ENCODE measurements at regions of chr20 and their contacts with region 1.

Region 1: DNA sequence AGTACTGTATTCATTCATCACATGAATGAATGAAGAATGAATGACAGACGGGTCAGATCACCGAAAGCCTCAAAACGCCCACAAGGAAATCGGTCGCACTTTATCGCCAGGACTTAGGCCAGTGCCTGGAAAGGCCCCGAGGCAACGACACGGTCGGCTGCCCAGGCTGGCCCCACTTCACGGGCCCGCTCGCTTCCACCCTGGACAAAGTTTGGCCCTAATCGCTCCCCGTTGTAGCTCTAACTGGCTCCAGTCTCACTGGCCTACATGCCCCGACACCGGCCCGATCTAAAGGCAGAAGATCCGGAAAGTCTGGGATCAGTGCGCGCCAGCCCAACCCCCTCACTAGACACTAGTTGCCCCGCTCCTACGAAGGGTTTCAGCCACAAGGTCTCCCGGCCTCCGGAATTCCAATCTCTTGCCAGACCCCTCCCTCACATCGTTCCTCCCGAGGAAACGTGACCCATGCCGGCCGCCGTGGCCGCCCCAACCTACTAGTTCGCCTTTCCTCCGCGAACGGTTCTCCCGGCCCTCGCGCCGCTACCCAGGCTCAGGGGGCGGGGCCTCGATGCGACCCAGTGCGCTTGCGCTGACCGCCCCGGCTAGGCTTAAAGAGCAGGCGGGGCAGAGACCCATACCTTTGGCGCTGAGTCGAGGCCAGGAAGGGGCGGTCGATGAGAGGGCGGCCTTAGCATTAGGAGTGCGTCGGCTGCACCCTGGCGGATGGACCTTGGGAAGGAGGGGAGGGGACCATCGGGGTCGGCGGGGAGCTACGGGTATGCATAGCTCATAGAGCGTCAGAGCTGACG is at the starts of genes GSS and MYH7B:
- DNase-seq: peak; percentile 95 to 96 (median 95)
- H3K4me3 ChIP-seq: peak within 1 kb of the TSS; percentile 69 to 89 (median 84)
- H3K4me3 Mint-ChIP-seq: peak within 1 kb of the TSS; percentile 97 to 99
- H3K27ac ChIP-seq: peak within 1 kb of the TSS; percentile 88 to 91
- H3K27ac Mint-ChIP-seq: peak within 1 kb of the TSS; percentile 96 to 99 (median 97)
- H3K4me1 ChIP-seq: peaks cover 13 to 14% of the 10 kb centered on the region in 2 donors
- H3K4me1 Mint-ChIP-seq: peaks cover 16% of the 10 kb centered on the region
- H3K27me3 ChIP-seq: no peaks in the 10 kb centered on the region
- H3K27me3 Mint-ChIP-seq: peaks cover 0 to 3% (median 0%) of the 10 kb centered on the region in 3 donors
- CTCF ChIP-seq: no peak
- polyA plus RNA-seq, gene GSS: 30.4 to 52.9 (median 34.0) TPM
- polyA plus RNA-seq, gene MYH7B: 0.75 TPM in 1 of 3 donors, not detected in the others

Region 2: DNA sequence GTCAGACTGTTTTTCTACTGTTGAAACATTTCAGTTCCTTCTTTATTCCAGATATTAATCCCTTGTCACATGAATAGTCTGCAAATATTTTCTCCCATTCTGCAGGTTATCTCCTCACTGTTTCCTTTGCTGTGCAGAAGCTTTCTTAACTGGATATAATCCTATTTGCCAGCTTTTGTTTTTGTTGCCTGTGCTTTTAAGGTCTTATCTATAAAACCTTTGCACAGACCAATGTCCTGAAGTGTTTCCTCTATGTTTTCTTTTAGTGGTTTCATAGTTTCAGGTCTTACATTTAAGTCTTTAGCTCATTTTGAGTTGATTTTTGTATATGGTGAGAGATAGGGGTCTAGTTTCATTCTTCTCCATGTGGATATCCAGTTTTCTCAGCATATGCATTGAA is 149.2 kb before region 1 on chr20:
- intact Hi-C with region 1: no loop called
- DNase-seq: no peak
- H3K4me3 ChIP-seq: no peak overlapping the region
- H3K4me3 Mint-ChIP-seq: no peak overlapping the region
- H3K27ac ChIP-seq: peak overlapping the region in 1 of 2 donors; percentile 9
- H3K27ac Mint-ChIP-seq: peak overlapping the region in 2 of 7 donors; percentile 19 to 64
- H3K4me1 ChIP-seq: no peaks in the 10 kb centered on the region
- H3K4me1 Mint-ChIP-seq: peaks cover 18% of the 10 kb centered on the region
- H3K27me3 ChIP-seq: no peaks in the 10 kb centered on the region
- H3K27me3 Mint-ChIP-seq: peaks cover 0 to 1% (median 0%) of the 10 kb centered on the region in 3 donors
- CTCF ChIP-seq: no peak

Region 3: GRCh38 chr20:34825530-34826362 is 129.7 kb before region 1 on chr20 and contains the start of gene NCOA6:
- intact Hi-C with region 1: loop called (anchors 5 kb)
- DNase-seq: peak; percentile 74 to 86 (median 81)
- H3K4me3 ChIP-seq: peak within 1 kb of the TSS; percentile 93 to 97 (median 95)
- H3K4me3 Mint-ChIP-seq: peak within 1 kb of the TSS; percentile 96 to 99
- H3K27ac ChIP-seq: peak within 1 kb of the TSS; percentile 71 to 87
- H3K27ac Mint-ChIP-seq: peak within 1 kb of the TSS; percentile 89 to 96 (median 93)
- H3K4me1 ChIP-seq: peaks cover 18 to 21% of the 10 kb centered on the region in 2 donors
- H3K4me1 Mint-ChIP-seq: peaks cover 38% of the 10 kb centered on the region
- H3K27me3 ChIP-seq: no peaks in the 10 kb centered on the region
- H3K27me3 Mint-ChIP-seq: peaks cover 1 to 5% (median 2%) of the 10 kb centered on the region in 3 donors
- CTCF ChIP-seq: no peak
- polyA plus RNA-seq, gene NCOA6: 2.8 to 19.0 (median 3.9) TPM

Region 4: GRCh38 chr20:34891166-34892062 is 64.0 kb before region 1 on chr20:
- intact Hi-C with region 1: loop called in 1 of 2 experiments (anchors 5 kb)
- DNase-seq: peak; percentile 87 to 94 (median 94)
- H3K4me3 ChIP-seq: peak overlapping the region in 1 of 3 experiments; percentile 7
- H3K4me3 Mint-ChIP-seq: no peak overlapping the region
- H3K27ac ChIP-seq: peak overlapping the region; percentile 34 to 92
- H3K27ac Mint-ChIP-seq: peak overlapping the region; percentile 82 to 97 (median 92)
- H3K4me1 ChIP-seq: peaks cover 34 to 37% of the 10 kb centered on the region in 2 donors
- H3K4me1 Mint-ChIP-seq: peaks cover 41% of the 10 kb centered on the region
- H3K27me3 ChIP-seq: no peaks in the 10 kb centered on the region
- H3K27me3 Mint-ChIP-seq: peaks cover 0 to 3% (median 0%) of the 10 kb centered on the region in 3 donors
- CTCF ChIP-seq: no peak

Region 5: GRCh38 chr20:35092524-35093266 is 137.3 kb after region 1 on chr20 and contains the start of gene TRPC4AP:
- intact Hi-C with region 1: loop called in 1 of 2 experiments (anchors 10 kb)
- DNase-seq: peak; percentile 86 to 89 (median 87)
- H3K4me3 ChIP-seq: peak within 1 kb of the TSS; percentile 90 to 95 (median 92)
- H3K4me3 Mint-ChIP-seq: peak within 1 kb of the TSS; percentile 91 to 94
- H3K27ac ChIP-seq: peak within 1 kb of the TSS; percentile 84 to 90
- H3K27ac Mint-ChIP-seq: peak within 1 kb of the TSS; percentile 94 to 99 (median 97)
- H3K4me1 ChIP-seq: peaks cover 43 to 56% of the 10 kb centered on the region in 2 donors
- H3K4me1 Mint-ChIP-seq: peaks cover 54% of the 10 kb centered on the region
- H3K27me3 ChIP-seq: no peaks in the 10 kb centered on the region
- H3K27me3 Mint-ChIP-seq: peaks cover 0 to 10% (median 1%) of the 10 kb centered on the region in 3 donors
- CTCF ChIP-seq: peak; percentile 98
- polyA plus RNA-seq, gene TRPC4AP: 80.8 to 98.4 (median 88.6) TPM